ENCODE measurements at regions of chr6 and their contacts with region 1.

Region 1: GRCh38 chr6:31271641-31272357 is at the start of gene HLA-C:
- DNase-seq: peak; percentile 93 to 95
- ATAC-seq: peak; percentile 98
- H3K4me3 ChIP-seq: peak within 1 kb of the TSS; percentile 41 to 78
- H3K27ac ChIP-seq: peak within 1 kb of the TSS in 1 of 2 donors; percentile 96
- H3K4me1 ChIP-seq: no peaks in the 10 kb centered on the region
- H3K27me3 ChIP-seq: no peaks in the 10 kb centered on the region
- total RNA-seq, gene HLA-C: 491 to 529 TPM

Region 2: GRCh38 chr6:30981942-30982772 is 289.6 kb before region 1 on chr6:
- intact Hi-C with region 1: no loop called
- DNase-seq: no peak
- ATAC-seq: no peak
- H3K4me3 ChIP-seq: no peak overlapping the region
- H3K27ac ChIP-seq: no peak overlapping the region
- H3K4me1 ChIP-seq: no peaks in the 10 kb centered on the region
- H3K27me3 ChIP-seq: peaks cover 0 to 2% of the 10 kb centered on the region in 2 donors

Region 3: DNA sequence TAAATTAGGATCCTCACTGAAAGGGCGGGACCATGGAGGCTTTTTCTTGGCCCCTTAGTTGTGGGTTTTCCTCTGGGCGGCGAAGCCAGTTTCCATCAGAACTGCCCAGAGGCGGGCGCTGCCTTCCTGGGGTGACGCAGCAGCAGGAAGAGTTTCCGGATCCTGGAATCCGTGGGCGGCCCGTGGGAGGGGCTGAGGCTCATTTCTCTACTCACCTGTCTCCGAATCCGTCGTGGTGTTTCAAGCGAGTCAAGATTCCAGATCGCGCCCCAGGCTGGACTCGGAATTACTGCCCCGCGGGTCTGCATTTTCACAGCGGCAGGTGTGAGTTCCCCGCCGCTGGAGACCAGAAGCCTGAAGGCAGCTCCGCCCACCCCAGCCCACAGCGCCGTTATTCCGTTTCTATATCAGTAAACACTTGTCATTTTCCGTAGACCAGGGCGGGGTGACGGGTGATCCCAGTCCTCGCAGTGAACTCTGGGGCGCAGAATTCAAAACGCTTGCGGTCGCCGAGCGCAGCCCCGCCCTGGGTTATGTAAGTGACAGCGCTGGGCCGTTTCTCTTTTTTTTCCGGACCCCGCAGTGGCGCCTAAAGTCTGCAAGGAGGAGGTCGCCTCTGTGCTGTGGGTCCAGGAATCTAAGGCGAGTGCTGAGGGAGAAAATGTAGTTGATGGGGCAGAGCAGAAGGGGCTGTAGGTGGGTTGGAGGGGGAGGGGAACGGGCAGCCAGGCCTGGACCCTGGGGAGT is 74.1 kb before region 1 on chr6:
- intact Hi-C with region 1: loop called (anchors 2 to 5 kb)
- DNase-seq: peak; percentile 96
- ATAC-seq: peak; percentile 94
- H3K4me3 ChIP-seq: peak overlapping the region; percentile 57 to 77
- H3K27ac ChIP-seq: peak overlapping the region; percentile 59 to 78
- H3K4me1 ChIP-seq: no peaks in the 10 kb centered on the region
- H3K27me3 ChIP-seq: no peaks in the 10 kb centered on the region

Region 4: DNA sequence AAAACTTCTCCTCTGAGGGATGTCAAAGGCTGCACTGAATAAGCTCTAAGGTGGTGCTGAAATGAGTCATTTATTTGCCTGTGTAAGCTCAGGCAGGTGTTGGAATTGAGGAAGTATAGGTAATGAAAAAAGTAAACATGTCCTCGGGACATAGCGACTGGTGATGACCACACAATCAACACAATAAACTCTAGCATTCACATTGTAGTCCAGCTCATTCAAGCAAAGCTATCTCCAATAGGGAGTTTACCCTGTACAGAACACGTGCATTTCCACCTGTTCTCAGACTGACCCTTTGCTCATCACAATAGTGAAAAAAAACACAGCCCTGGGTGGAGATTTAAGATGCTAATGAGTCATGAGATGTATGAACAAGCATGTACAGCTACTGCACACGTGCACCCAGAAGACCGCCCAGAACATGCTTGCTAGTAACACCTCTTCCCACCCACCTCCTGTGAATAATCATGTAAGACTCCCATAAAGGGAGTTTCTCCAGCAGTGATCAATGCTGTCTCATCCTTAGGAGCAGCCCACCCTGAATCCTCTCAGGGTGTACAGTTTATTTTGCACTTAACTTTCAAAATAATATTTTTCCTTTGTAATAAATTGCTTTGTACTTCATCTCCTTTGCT is 68.3 kb before region 1 on chr6:
- intact Hi-C with region 1: loop called in 1 of 2 experiments (anchors 5 kb)
- DNase-seq: no peak
- ATAC-seq: no peak
- H3K4me3 ChIP-seq: no peak overlapping the region
- H3K27ac ChIP-seq: peak overlapping the region in 1 of 2 donors; percentile 29
- H3K4me1 ChIP-seq: peaks cover 0 to 5% of the 10 kb centered on the region in 2 donors
- H3K27me3 ChIP-seq: no peaks in the 10 kb centered on the region

Region 5: GRCh38 chr6:31356946-31357466 is 85.2 kb after region 1 on chr6 and contains the start of gene HLA-B:
- intact Hi-C with region 1: loop called in 1 of 2 experiments (anchors 5 kb)
- DNase-seq: peak; percentile 93 to 95
- ATAC-seq: peak; percentile 96
- H3K4me3 ChIP-seq: peak within 1 kb of the TSS; percentile 32 to 97
- H3K27ac ChIP-seq: peak within 1 kb of the TSS in 1 of 2 donors; percentile 48
- H3K4me1 ChIP-seq: no peaks in the 10 kb centered on the region
- H3K27me3 ChIP-seq: no peaks in the 10 kb centered on the region
- total RNA-seq, gene HLA-B: 862 to 1,392 TPM

Region 6: DNA sequence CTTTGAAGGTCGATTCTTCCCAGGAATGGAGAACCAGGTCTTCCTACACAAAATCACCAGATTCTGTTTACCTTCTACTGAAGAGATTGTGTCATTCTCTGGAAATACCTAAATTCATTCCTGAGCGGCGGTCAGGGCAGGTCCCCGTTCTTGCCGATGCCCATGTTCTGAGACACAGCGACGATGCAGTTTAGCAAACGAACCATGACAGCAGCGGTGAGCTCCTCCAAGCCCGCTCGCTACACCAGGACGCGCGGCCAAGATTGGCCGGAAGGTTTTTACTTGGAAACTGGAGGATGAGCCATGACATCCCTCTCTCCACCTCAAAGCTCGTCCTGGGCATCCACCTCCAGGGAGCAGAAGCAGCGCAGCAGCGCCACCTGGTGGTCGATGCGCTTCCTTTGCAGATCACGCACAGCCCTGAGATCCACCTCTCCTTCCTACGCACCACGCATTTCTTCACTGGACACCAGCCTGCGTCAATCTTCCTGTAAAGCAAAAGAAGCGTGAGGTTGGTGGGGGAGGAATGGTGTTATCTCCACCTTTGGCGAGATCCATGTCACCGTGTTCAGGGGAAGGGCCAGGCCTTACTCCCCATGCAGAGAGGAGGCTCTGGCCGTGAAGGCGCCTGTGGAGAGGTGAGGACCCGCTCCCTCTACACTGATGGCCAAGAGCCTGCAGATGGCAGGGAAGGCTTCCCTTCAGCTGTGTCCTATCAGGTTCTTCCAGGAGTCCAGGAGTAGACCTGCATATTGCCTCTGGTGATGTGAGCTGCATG is 95.1 kb after region 1 on chr6:
- intact Hi-C with region 1: loop called in 1 of 2 experiments (anchors 5 kb)
- DNase-seq: peak; percentile 89 to 97
- ATAC-seq: peak; percentile 96
- H3K4me3 ChIP-seq: no peak overlapping the region
- H3K27ac ChIP-seq: no peak overlapping the region
- H3K4me1 ChIP-seq: no peaks in the 10 kb centered on the region
- H3K27me3 ChIP-seq: no peaks in the 10 kb centered on the region